BJ (cell line): ENCODE measurements at regions of chrX and their contacts with region 1.

Region 1: DNA sequence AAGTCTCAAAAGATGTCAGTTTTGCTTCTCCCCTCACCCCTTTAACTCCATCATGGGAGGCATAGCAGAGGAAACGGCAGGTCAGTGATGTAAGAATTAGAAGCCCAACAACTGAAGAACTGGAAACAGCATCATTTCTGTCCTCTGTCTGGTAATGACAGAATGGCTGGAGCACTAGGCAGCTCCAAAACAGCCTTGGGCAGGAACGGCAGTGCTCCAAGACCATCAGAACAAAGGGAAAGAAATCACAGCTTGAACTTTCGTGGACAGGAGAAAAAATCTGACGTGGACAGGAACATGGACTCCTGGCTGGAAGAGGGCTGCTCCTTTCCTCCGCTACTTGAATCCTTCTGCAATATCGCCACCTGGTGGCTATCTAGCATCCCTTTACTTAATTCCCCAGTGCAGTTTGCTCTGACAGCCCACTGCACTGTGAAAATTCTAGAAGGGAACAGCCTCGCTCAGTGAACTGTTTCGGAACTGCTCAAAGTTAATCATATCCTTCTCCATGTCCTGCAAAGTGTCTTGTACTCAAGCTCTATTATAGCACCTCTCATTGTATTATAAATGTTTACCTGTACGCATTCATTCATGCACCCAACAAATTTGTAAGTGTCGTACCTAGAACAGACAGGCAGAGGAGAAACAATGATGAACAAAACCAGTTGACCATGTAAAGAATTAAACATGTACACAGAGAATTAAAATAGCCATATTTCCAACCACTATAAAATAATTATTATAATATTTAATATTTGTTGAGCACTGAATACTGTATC is 20.4 kb downstream of the SLC25A53 start:
- DNase-seq: no peak
- H3K4me3 ChIP-seq: peak overlapping the region; percentile 49
- H3K27me3 ChIP-seq: no peaks in the 10 kb centered on the region
- CTCF ChIP-seq: peak; percentile 63

Region 2: GRCh38 chrX:103910371-103910770 is 226.1 kb before region 1 on chrX:
- CTCF ChIA-PET with region 1: no interaction called
- POLR2A ChIA-PET with region 1: no interaction called
- DNase-seq: no peak
- H3K4me3 ChIP-seq: no peak overlapping the region
- H3K27me3 ChIP-seq: no peaks in the 10 kb centered on the region
- CTCF ChIP-seq: no peak

Region 3: GRCh38 chrX:104098151-104098808 is 38.1 kb before region 1 on chrX:
- CTCF ChIA-PET with region 1: interaction called, 13 read pairs
- POLR2A ChIA-PET with region 1: no interaction called
- DNase-seq: no peak
- H3K4me3 ChIP-seq: no peak overlapping the region
- H3K27me3 ChIP-seq: no peaks in the 10 kb centered on the region
- CTCF ChIP-seq: peak; percentile 49

Region 4: GRCh38 chrX:104195013-104195412 is 58.6 kb after region 1 on chrX:
- CTCF ChIA-PET with region 1: no interaction called
- POLR2A ChIA-PET with region 1: no interaction called
- DNase-seq: no peak
- H3K4me3 ChIP-seq: no peak overlapping the region
- H3K27me3 ChIP-seq: no peaks in the 10 kb centered on the region
- CTCF ChIP-seq: no peak